ENCODE measurements at regions of chr2 and their contacts with region 1.

Region 1: GRCh38 chr2:102020596-102021181 is 28.9 kb downstream of the IL1R2 start:
- DNase-seq: no peak
- ATAC-seq: peak; percentile 80
- H3K4me3 ChIP-seq: no peak overlapping the region
- H3K27ac ChIP-seq: no peak overlapping the region
- H3K4me1 ChIP-seq: peaks cover 7% of the 10 kb centered on the region
- H3K27me3 ChIP-seq: no peaks in the 10 kb centered on the region
- CTCF ChIP-seq: peak; percentile 93 to 98 (median 97); a peak in 5 of 6 replicates
- EP300 ChIP-seq: no peak
- POLR2A ChIP-seq: no peak
- RAD21 ChIP-seq: peak; percentile 92

Region 2: DNA sequence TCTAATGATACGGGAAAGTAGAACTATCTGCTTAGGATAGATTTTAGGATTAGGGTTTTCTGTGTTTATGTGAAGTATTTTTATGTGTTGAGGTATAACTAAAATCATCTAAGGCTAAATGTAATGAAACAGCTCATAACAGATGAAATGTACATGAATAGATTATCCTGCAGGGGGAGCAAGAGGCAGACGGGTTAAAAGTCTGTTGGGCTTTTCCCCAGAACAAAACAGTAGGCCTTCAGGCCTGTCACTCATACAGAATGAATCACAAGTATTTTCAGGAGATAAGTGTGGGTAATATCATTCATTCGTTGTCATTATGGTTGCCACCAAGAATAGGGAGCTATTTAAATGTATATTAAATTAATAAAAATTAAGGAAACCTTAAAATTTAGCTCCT is 136.8 kb before region 1 on chr2:
- CTCF ChIA-PET with region 1: interaction called, 166 read pairs
- POLR2A ChIA-PET with region 1: interaction called, 5 read pairs
- RAD21 ChIA-PET with region 1: interaction called, 31 read pairs
- SMC1A ChIA-PET with region 1: interaction called, 37 read pairs
- in situ Hi-C with region 1: no loop called
- intact Hi-C with region 1: loop called (anchors 1 kb)
- DNase-seq: no peak
- ATAC-seq: peak; percentile 95
- H3K4me3 ChIP-seq: no peak overlapping the region
- H3K27ac ChIP-seq: no peak overlapping the region
- H3K4me1 ChIP-seq: no peaks in the 10 kb centered on the region
- H3K27me3 ChIP-seq: no peaks in the 10 kb centered on the region
- CTCF ChIP-seq: peak; percentile 50 to 70 (median 63); a peak in 5 of 6 replicates
- EP300 ChIP-seq: no peak
- POLR2A ChIP-seq: no peak
- RAD21 ChIP-seq: peak; percentile 64

Region 3: GRCh38 chr2:102033031-102033749 is 12.5 kb after region 1 on chr2:
- CTCF ChIA-PET with region 1: interaction called, 4 read pairs
- POLR2A ChIA-PET with region 1: interaction called, 3 read pairs
- RAD21 ChIA-PET with region 1: interaction called, 9 read pairs
- SMC1A ChIA-PET with region 1: interaction called, 72 read pairs
- in situ Hi-C with region 1: no loop called
- intact Hi-C with region 1: no loop called
- DNase-seq: peak; percentile 53
- ATAC-seq: peak; percentile 94
- H3K4me3 ChIP-seq: no peak overlapping the region
- H3K27ac ChIP-seq: no peak overlapping the region
- H3K4me1 ChIP-seq: peaks cover 5% of the 10 kb centered on the region
- H3K27me3 ChIP-seq: no peaks in the 10 kb centered on the region
- CTCF ChIP-seq: no peak
- EP300 ChIP-seq: peak in 1 of 2 experiments; percentile 29; a peak in 1 of 4 replicates
- POLR2A ChIP-seq: no peak
- RAD21 ChIP-seq: no peak

Region 4: DNA sequence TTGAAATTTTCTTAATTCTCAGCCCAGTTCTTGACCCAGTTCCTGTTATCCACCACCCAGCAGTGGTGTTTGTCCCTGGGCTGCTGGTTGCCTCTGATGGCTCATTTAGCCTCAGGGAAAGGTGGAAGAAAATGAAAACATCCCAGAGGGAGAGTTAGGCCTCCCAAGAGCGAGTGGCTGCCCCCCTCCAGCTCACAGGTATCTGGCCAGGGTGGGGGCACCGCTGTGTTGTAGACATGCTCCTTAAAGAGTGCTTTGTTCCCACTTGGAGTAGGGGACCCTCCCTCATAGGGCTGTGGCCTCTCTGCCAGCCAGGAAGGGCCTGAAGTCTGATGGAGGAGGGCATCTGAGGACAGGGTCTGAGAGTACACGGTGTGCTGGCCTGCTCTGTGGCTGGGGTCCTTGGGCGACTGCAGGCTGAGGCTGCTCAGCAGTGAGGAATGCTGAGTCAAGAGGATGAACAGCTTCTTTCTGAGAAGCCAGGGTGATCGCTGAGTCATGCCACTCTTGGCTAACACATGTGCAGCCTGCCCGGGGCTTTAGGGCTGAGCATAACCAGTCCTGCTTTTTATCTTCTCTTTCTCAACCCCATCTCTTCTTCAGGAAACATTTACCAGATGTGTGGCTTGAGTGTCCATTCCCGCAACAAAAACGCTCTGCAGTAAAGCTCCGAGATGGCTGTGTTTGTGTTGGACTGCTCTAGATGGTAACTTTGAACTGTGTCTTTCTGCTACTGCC is 43.4 kb after region 1 on chr2:
- CTCF ChIA-PET with region 1: interaction called, 6 read pairs
- POLR2A ChIA-PET with region 1: no interaction called
- RAD21 ChIA-PET with region 1: interaction called, 29 read pairs
- SMC1A ChIA-PET with region 1: interaction called, 97 read pairs
- in situ Hi-C with region 1: no loop called
- intact Hi-C with region 1: no loop called
- DNase-seq: no peak
- ATAC-seq: peak; percentile 69
- H3K4me3 ChIP-seq: no peak overlapping the region
- H3K27ac ChIP-seq: no peak overlapping the region
- H3K4me1 ChIP-seq: no peaks in the 10 kb centered on the region; the same call in 1 of the 2 replicates
- H3K27me3 ChIP-seq: no peaks in the 10 kb centered on the region; a peak in 1 of 4 replicates
- CTCF ChIP-seq: no peak
- EP300 ChIP-seq: no peak
- POLR2A ChIP-seq: no peak
- RAD21 ChIP-seq: no peak

Region 5: GRCh38 chr2:102103992-102104871 is 83.5 kb after region 1 on chr2:
- CTCF ChIA-PET with region 1: interaction called, 31 read pairs
- POLR2A ChIA-PET with region 1: interaction called, 35 read pairs
- RAD21 ChIA-PET with region 1: interaction called, 115 read pairs
- SMC1A ChIA-PET with region 1: interaction called, 80 read pairs
- in situ Hi-C with region 1: no loop called
- intact Hi-C with region 1: loop called (anchors 1 kb)
- DNase-seq: peak; percentile 67
- ATAC-seq: peak; percentile 79
- H3K4me3 ChIP-seq: peak overlapping the region; percentile 53
- H3K27ac ChIP-seq: peak overlapping the region; percentile 37; the same call in 1 of the 2 replicates
- H3K4me1 ChIP-seq: no peaks in the 10 kb centered on the region
- H3K27me3 ChIP-seq: no peaks in the 10 kb centered on the region
- CTCF ChIP-seq: no peak
- EP300 ChIP-seq: peak in 1 of 2 experiments; percentile 54; a peak in 2 of 4 replicates
- POLR2A ChIP-seq: no peak
- RAD21 ChIP-seq: no peak

Region 6: GRCh38 chr2:102235491-102235890 is 214.8 kb after region 1 on chr2:
- CTCF ChIA-PET with region 1: interaction called, 370 read pairs
- POLR2A ChIA-PET with region 1: interaction called, 32 read pairs
- RAD21 ChIA-PET with region 1: interaction called, 114 read pairs
- SMC1A ChIA-PET with region 1: interaction called, 157 read pairs
- in situ Hi-C with region 1: loop called (anchors 5 kb)
- intact Hi-C with region 1: loop called (anchors 1 kb)
- DNase-seq: no peak
- ATAC-seq: peak; percentile 46
- H3K4me3 ChIP-seq: no peak overlapping the region
- H3K27ac ChIP-seq: no peak overlapping the region
- H3K4me1 ChIP-seq: peaks cover 10% of the 10 kb centered on the region; the same call in 1 of the 2 replicates
- H3K27me3 ChIP-seq: no peaks in the 10 kb centered on the region
- CTCF ChIP-seq: peak in 2 of 3 experiments; percentile 27 to 36; a peak in 2 of 6 replicates
- EP300 ChIP-seq: no peak
- POLR2A ChIP-seq: no peak
- RAD21 ChIP-seq: peak; percentile 59

Region 7: DNA sequence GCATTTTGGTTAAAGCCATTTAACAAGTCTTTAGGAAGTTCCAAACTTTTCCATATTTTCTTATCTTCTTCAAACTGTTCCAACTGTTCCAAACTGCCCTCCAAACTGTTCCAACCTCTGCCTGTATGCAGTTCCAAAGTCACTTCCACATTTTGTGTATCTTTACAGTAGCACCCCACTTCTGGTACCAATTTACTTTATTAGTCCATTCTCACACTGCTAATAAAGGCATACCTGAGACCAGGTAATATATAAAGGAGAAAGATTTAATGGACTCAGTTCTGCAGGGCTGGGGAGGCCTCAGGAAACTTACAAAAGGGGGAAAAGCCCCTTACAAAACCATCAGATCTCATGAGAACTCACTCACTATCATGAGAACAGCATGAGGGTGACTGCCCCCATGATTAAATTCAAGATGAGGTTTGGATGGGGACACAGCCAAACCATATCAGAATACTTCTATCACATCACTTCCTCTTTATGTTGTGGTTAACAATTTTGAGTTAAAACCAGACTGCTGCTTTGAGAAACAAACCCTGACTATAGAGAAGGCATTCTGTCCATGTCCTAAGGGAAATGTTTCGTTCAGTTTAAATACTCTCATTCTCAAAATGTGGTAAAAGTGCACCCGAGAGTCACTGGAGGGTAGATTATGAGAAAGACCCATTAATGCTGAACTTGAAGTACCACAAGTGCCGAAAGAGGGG is 345.9 kb after region 1 on chr2:
- CTCF ChIA-PET with region 1: no interaction called
- POLR2A ChIA-PET with region 1: no interaction called
- RAD21 ChIA-PET with region 1: no interaction called
- SMC1A ChIA-PET with region 1: no interaction called
- in situ Hi-C with region 1: loop called (anchors 5 kb)
- intact Hi-C with region 1: loop called (anchors 1 kb)
- DNase-seq: peak; percentile 91
- ATAC-seq: peak; percentile 79
- H3K4me3 ChIP-seq: no peak overlapping the region
- H3K27ac ChIP-seq: peak overlapping the region; percentile 93
- H3K4me1 ChIP-seq: peaks cover 23% of the 10 kb centered on the region
- H3K27me3 ChIP-seq: no peaks in the 10 kb centered on the region
- CTCF ChIP-seq: no peak
- EP300 ChIP-seq: peak in 1 of 2 experiments; percentile 45; a peak in 2 of 4 replicates
- POLR2A ChIP-seq: no peak
- RAD21 ChIP-seq: peak; percentile 8; the same call in 1 of the 2 replicates